Ovary (tissue), 10 donors: ENCODE measurements at regions of chr3 and their contacts with region 1.

Region 1: DNA sequence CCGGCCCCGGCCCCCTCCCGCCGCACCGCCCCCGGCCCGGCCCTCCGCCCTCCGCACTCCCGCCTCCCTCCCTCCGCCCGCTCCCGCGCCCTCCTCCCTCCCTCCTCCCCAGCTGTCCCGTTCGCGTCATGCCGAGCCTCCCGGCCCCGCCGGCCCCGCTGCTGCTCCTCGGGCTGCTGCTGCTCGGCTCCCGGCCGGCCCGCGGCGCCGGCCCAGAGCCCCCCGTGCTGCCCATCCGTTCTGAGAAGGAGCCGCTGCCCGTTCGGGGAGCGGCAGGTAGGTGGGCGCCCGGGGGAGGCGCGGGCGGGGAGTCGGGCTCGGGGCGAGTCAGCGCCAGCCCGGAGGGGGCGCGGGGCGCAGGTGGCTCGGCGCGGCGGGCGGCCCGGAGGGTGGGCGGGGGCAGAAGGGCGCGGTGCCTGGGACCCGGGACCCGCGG is 355 bp downstream of the CHRD start:
- DNase-seq: peak; percentile 81 to 87 (median 86)
- H3K4me3 ChIP-seq: peak overlapping the region; percentile 67
- H3K27ac ChIP-seq: peak overlapping the region in 1 of 2 donors; percentile 23
- H3K4me1 ChIP-seq: peaks cover 2% of the 10 kb centered on the region
- H3K27me3 ChIP-seq: no peaks in the 10 kb centered on the region
- CTCF ChIP-seq: no peak
- EP300 ChIP-seq: no peak
- POLR2A ChIP-seq: no peak

Region 2: GRCh38 chr3:184218814-184219213 is 161.4 kb before region 1 on chr3:
- intact Hi-C with region 1: no loop called
- DNase-seq: no peak
- H3K4me3 ChIP-seq: no peak overlapping the region
- H3K27ac ChIP-seq: no peak overlapping the region
- H3K4me1 ChIP-seq: no peaks in the 10 kb centered on the region
- H3K27me3 ChIP-seq: no peaks in the 10 kb centered on the region
- CTCF ChIP-seq: no peak
- EP300 ChIP-seq: no peak
- POLR2A ChIP-seq: no peak

Region 3: DNA sequence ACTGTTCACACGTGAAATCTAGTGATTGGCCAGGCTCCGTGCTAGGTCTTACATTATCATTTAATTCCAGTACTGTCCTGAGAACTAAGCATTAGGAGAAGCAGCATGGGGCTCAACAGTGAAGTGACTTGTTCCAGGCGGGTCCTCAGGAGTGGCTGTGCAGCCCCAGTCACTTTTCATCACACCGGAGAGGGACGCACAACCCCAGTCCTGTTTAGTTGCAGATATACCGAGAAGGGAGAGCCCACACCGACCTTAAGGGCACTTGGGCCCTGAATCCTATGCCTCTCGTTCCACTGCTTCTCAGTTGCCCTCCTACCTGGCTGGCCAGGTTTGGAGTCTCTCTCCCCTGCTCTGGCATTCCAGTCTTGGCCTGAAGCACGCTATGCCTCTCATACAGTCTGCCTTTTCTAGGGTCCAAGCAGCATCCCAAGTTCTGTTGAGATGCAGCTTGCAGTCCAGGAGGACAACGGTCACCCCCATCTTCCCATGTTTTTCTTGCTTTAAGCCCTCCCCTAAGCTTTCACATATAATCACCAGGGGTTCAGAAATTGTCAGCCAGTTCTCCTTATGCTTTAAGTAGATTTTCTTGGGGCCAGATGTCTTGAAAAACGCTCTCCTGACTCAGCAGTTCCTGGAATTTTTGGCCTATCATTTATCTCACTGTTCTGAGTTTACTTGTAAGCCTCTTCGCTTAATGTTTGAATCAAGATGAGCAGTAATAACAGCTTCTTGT is 32.7 kb before region 1 on chr3:
- intact Hi-C with region 1: loop called in 1 of 4 experiments (anchors 2 kb)
- DNase-seq: no peak
- H3K4me3 ChIP-seq: no peak overlapping the region
- H3K27ac ChIP-seq: peak overlapping the region in 1 of 2 donors; percentile 43
- H3K4me1 ChIP-seq: peaks cover 12% of the 10 kb centered on the region
- H3K27me3 ChIP-seq: no peaks in the 10 kb centered on the region
- CTCF ChIP-seq: no peak
- EP300 ChIP-seq: no peak
- POLR2A ChIP-seq: no peak